CD4-positive, alpha-beta T cell (primary cell): ENCODE measurements at regions of chr3 and their contacts with region 1.

Region 1: DNA sequence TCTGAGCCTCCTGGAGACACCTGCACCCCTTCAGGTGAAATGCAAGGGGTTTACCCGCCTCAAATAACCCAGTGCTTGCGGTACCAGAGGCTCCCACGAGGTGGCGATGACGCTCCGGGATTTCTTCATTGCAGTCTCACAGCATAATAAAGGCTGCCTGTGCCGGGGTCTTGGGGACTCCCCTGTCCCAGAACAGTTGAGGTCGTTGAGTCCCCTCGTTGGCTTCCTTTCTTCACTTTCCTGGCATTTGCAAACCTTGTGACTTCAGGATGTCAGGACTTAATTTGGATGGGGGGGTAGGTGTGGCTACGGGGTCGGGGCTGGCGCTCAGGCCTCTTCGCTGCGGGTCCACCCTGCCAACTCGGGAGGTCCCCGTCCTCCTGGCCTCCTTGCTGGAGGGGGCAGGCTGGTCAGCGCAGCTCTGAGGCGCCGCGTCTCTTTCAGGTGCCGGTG is 1.3 kb downstream of the GNAT1 start:
- DNase-seq: peak; percentile 69 to 91 (median 82)
- ATAC-seq: peak; percentile 25
- H3K4me3 ChIP-seq: no peak overlapping the region
- H3K4me3 Mint-ChIP-seq: peak overlapping the region; percentile 34
- H3K27ac ChIP-seq: no peak overlapping the region
- H3K27ac Mint-ChIP-seq: no peak overlapping the region
- H3K4me1 ChIP-seq: peaks cover 27% of the 10 kb centered on the region
- H3K4me1 Mint-ChIP-seq: peaks cover 15% of the 10 kb centered on the region
- H3K27me3 ChIP-seq: peaks cover 13 to 17% of the 10 kb centered on the region in 2 experiments
- H3K27me3 Mint-ChIP-seq: peaks cover 26% of the 10 kb centered on the region
- CTCF ChIP-seq: peak; percentile 88

Region 2: GRCh38 chr3:50121416-50122032 is 71.2 kb before region 1 on chr3:
- CTCF ChIA-PET with region 1: no interaction called
- POLR2A ChIA-PET with region 1: no interaction called
- intact Hi-C with region 1: loop called (anchors 1 to 2 kb)
- DNase-seq: peak; percentile 55 to 86 (median 65)
- ATAC-seq: peak; percentile 87
- H3K4me3 ChIP-seq: no peak overlapping the region
- H3K4me3 Mint-ChIP-seq: no peak overlapping the region
- H3K27ac ChIP-seq: no peak overlapping the region
- H3K27ac Mint-ChIP-seq: peak overlapping the region; percentile 61
- H3K4me1 ChIP-seq: peaks cover 7% of the 10 kb centered on the region
- H3K4me1 Mint-ChIP-seq: peaks cover 6% of the 10 kb centered on the region
- H3K27me3 ChIP-seq: no peaks in the 10 kb centered on the region
- H3K27me3 Mint-ChIP-seq: no peaks in the 10 kb centered on the region
- CTCF ChIP-seq: peak; percentile 86

Region 3: DNA sequence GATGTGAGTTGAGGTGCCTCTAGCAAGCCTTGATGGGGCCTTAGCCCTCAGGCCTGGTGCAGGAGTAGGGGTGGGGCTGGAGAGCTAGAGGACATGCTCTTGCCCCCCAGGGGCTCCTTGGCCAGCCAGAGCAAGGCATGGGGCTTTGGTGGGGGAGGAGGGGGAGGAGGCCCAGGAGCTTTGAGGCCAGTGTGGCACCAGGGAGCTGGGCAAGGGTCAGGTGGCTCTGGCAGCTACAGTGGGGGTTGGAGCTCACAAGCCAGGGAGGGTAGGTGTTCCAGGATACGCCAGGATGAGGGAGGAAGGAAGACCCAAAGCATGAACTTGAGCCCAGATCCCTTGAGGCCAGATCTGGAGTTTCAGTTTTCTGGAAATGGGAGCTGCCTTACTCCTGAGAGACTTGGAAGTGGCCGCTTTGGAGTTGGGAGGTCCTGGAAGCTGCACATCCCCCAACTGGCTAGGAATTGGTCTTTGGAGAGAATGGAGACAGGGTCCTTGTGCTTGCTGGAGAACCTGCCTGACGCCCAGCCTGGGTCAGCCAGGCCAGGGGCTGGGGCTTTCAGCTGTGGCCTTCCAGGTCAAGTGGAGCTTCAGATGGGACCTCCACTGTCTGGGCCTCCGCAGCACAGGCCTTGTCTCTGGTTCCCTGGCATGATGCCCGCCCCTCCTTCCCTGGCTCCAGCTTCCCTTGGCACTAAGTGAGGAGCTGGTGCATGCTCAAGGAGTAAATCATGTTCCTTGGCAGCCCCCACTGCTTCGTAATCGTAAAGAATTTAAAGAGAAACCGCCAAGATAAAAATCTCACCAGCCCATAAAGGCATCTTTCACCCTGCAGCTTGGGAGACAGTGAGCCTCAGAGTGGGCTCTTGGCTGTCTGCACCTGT is 28.9 kb before region 1 on chr3:
- CTCF ChIA-PET with region 1: no interaction called
- POLR2A ChIA-PET with region 1: no interaction called
- intact Hi-C with region 1: no loop called
- DNase-seq: no peak
- ATAC-seq: no peak
- H3K4me3 ChIP-seq: no peak overlapping the region
- H3K4me3 Mint-ChIP-seq: no peak overlapping the region
- H3K27ac ChIP-seq: no peak overlapping the region
- H3K27ac Mint-ChIP-seq: no peak overlapping the region
- H3K4me1 ChIP-seq: no peaks in the 10 kb centered on the region
- H3K4me1 Mint-ChIP-seq: no peaks in the 10 kb centered on the region
- H3K27me3 ChIP-seq: no peaks in the 10 kb centered on the region
- H3K27me3 Mint-ChIP-seq: peaks cover 3% of the 10 kb centered on the region
- CTCF ChIP-seq: no peak

Region 4: DNA sequence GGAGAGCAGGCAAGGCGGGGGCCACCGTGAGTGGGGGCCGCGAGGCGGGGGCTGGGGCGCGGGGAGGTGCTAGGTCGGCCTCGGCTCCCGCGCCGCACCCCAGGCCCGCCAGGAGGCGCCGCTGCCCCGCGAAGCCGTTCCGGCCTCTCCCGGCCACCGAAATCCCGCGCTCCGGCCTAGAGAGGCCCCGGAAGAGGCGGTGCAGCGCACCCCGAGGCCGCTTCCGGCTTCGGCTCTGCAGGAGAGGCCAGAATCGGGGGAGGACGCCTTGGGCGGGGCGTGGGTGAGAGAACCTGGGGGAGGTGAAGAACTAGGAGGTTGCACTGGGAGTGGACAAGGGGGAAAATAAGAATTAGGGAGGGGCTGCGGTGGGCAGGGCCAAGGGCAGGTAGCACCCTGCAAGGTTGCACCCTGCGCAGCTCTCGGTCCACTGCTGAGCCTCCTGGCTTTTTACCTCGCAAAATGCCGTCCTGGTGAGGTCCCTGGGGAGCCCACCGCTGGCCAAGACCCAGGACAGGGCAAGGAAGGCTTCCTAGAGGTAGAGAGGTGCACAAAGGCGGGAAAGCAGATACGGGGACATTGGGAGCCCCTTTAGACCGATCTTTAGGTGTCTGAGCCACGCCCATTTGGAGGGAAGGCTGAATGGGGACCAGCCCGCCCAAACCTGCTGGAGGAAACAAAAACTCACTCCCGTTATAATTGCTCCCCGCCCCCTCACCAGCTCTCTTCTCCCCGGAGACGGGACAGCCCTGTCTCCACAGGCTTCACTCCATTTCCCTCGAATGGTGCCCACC is 34.9 kb after region 1 on chr3:
- CTCF ChIA-PET with region 1: interaction called, 82 read pairs
- POLR2A ChIA-PET with region 1: interaction called, 32 read pairs
- intact Hi-C with region 1: loop called (anchors 1 kb)
- DNase-seq: peak; percentile 82 to 96 (median 90)
- ATAC-seq: peak; percentile 80
- H3K4me3 ChIP-seq: peak overlapping the region; percentile 68
- H3K4me3 Mint-ChIP-seq: peak overlapping the region; percentile 99
- H3K27ac ChIP-seq: peak overlapping the region; percentile 47 to 70
- H3K27ac Mint-ChIP-seq: peak overlapping the region; percentile 89
- H3K4me1 ChIP-seq: peaks cover 36% of the 10 kb centered on the region
- H3K4me1 Mint-ChIP-seq: peaks cover 32% of the 10 kb centered on the region
- H3K27me3 ChIP-seq: no peaks in the 10 kb centered on the region
- H3K27me3 Mint-ChIP-seq: no peaks in the 10 kb centered on the region
- CTCF ChIP-seq: peak; percentile 85

Region 5: DNA sequence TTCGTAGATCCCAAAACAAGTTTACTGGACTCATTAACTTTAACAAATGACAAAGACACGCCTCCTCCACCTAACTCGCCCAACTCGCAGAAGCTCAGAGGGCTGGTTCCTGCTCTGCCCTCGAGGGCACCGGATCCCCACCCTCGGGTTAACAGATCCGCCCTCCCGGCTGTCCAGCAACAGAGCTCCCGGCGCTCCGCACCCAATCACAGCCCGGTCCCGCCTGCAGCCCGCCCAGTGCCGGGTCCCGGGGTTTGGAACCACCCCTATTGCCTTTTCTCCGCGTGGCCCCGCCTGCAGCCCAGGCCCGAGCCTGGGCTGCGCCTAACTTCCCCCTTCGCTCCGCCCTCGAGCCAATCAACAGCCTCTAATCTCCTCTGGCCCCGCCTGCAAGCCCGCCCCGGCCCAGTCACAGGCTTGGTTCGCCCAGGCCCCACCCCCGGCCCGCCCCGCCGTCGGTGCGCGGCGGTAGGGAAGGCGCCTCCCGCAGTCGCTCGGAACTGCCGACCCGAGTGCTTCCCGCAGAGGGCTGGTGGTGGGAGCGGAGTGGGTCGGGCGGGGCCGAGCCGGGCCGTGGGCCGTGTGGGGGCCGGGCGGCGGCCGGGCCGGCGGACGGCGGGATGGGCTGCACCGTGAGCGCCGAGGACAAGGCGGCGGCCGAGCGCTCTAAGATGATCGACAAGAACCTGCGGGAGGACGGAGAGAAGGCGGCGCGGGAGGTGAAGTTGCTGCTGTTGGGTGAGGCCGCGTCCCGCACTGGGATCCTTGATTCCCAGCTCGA is 43.2 kb after region 1 on chr3 and contains the start of gene GNAI2:
- CTCF ChIA-PET with region 1: interaction called, 11 read pairs
- POLR2A ChIA-PET with region 1: interaction called, 3 read pairs
- intact Hi-C with region 1: no loop called
- DNase-seq: peak; percentile 97 to 100 (median 99)
- ATAC-seq: peak; percentile 85
- H3K4me3 ChIP-seq: peak within 1 kb of the TSS; percentile 99
- H3K4me3 Mint-ChIP-seq: peak within 1 kb of the TSS; percentile 94
- H3K27ac ChIP-seq: peak within 1 kb of the TSS; percentile 73 to 80
- H3K27ac Mint-ChIP-seq: peak within 1 kb of the TSS; percentile 92
- H3K4me1 ChIP-seq: peaks cover 47% of the 10 kb centered on the region
- H3K4me1 Mint-ChIP-seq: peaks cover 45% of the 10 kb centered on the region
- H3K27me3 ChIP-seq: no peaks in the 10 kb centered on the region
- H3K27me3 Mint-ChIP-seq: no peaks in the 10 kb centered on the region
- CTCF ChIP-seq: no peak
- total RNA-seq, gene GNAI2: 204 to 217 TPM

Region 6: DNA sequence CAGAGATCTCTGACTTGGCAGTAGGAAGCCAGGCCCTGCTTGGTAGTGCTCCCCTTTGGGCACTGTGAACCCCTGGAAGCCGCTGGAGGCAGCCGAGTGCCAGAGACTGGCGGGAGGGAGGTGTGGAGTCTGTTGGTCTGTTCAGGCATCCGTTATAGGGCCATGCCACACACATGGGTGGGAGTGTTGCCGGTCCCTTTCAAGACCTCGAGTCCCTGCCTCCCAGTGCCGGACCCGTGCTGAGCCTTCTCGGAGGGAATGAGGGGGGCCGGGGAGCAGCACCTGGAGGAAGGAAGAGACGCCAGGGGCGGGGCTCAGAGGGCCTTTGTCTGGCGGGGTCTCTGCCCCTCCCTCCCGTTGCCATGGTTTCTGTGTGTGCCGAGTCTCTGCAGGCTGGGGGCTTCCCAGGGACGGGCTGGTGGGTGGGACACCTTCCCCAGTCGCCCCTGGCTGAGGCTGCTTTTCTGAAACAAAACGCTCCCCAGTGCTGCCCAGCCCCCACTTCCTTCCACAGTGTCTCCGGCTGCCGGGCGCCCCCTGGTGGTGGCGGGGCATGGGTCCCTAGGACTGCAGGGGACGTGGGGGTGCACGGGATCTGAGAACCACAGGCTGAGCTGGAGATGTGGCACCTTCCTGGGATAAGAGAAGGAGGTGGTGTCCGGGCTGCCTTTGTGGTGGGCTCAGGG is 53.3 kb after region 1 on chr3:
- CTCF ChIA-PET with region 1: interaction called, 53 read pairs
- POLR2A ChIA-PET with region 1: interaction called, 16 read pairs
- intact Hi-C with region 1: loop called (anchors 1 kb)
- DNase-seq: peak; percentile 92 to 98 (median 94)
- ATAC-seq: peak; percentile 80
- H3K4me3 ChIP-seq: peak overlapping the region; percentile 47
- H3K4me3 Mint-ChIP-seq: peak overlapping the region; percentile 83
- H3K27ac ChIP-seq: peak overlapping the region; percentile 89 to 90
- H3K27ac Mint-ChIP-seq: peak overlapping the region; percentile 92
- H3K4me1 ChIP-seq: peaks cover 100% of the 10 kb centered on the region
- H3K4me1 Mint-ChIP-seq: peaks cover 79% of the 10 kb centered on the region
- H3K27me3 ChIP-seq: no peaks in the 10 kb centered on the region
- H3K27me3 Mint-ChIP-seq: no peaks in the 10 kb centered on the region
- CTCF ChIP-seq: peak; percentile 98

Region 7: DNA sequence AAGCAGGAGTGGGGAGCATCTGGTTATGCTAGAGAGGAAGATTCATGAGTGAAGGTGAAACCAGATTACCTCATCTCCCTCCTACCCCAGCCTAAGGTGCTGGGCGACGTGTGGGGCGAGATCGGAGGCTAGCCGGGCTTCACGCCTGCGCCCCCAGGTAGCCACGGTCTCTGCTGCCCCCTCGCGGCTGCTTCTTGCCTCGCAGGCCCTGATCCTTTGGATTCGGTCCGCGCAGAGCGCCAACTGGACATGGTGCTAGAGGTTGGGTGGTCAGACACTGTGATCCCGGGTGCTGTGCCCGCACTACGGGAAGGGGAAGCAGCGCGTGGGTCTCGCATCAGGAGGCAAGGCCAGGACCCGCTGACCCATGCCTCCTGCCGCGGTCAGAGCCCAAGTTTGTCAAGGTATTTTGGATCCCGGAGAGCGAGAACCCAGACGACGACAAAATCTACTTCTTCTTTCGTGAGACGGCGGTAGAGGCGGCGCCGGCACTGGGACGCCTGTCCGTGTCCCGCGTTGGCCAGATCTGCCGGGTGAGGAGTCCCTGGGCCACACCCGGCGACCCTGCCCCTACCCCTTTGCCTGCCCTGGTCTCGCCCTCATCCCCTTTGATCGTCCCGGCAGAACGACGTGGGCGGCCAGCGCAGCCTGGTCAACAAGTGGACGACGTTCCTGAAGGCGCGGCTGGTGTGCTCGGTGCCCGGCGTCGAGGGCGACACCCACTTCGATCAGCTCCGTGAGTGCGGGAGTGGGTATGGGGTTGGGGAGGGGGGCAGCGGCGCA is 80.4 kb after region 1 on chr3:
- CTCF ChIA-PET with region 1: interaction called, 11 read pairs
- POLR2A ChIA-PET with region 1: no interaction called
- intact Hi-C with region 1: loop called (anchors 1 kb)
- DNase-seq: peak; percentile 70 to 92 (median 84)
- ATAC-seq: peak; percentile 78
- H3K4me3 ChIP-seq: peak overlapping the region; percentile 6
- H3K4me3 Mint-ChIP-seq: peak overlapping the region; percentile 48
- H3K27ac ChIP-seq: no peak overlapping the region
- H3K27ac Mint-ChIP-seq: no peak overlapping the region
- H3K4me1 ChIP-seq: peaks cover 40% of the 10 kb centered on the region
- H3K4me1 Mint-ChIP-seq: peaks cover 30% of the 10 kb centered on the region
- H3K27me3 ChIP-seq: peaks cover 35 to 45% of the 10 kb centered on the region in 2 experiments
- H3K27me3 Mint-ChIP-seq: peaks cover 52% of the 10 kb centered on the region
- CTCF ChIP-seq: peak; percentile 92

Region 8: DNA sequence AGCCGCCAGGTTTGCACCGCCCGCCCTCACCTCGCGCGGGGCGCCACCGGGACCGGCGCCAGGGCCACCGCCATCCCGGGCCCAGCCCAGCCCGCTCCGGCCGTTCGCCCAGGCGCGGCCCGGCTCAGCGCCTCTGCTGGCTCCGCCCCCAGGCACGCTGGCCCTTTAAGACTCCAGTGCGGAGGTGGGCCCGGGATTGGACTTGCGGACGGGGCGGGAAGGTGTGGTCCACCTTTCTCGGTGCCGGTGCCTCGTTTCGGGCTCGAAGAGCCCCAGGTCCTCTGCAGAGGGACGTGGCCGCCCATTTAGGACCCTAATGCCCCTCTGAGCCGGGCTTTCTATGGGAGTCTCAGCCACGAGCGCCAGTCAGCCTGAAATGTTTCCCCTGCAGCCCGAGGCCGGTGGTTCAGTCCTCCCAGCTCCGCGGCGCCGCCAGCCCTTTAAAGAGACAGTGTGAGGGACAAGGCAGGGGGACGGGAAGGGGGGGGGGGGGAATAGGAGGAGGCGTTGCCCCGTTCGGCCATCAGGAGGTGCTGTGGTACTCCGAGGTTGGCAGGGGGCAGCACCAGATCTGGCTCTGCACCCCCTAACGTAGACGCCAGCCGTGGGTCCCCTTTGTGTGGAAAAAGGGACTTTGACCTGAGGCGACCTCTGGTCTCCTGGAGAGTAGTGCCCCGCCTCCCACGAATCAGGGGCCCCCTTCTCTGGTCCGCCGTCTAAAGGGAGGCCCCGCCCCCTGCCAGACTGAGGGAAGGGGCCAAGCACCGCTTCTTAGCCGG is 128.8 kb after region 1 on chr3:
- CTCF ChIA-PET with region 1: no interaction called
- POLR2A ChIA-PET with region 1: no interaction called
- intact Hi-C with region 1: loop called in 1 of 2 experiments (anchors 5 kb)
- DNase-seq: peak; percentile 68 to 89 (median 76)
- ATAC-seq: peak; percentile 66
- H3K4me3 ChIP-seq: peak overlapping the region; percentile 68
- H3K4me3 Mint-ChIP-seq: peak overlapping the region; percentile 90
- H3K27ac ChIP-seq: peak overlapping the region; percentile 75 to 96
- H3K27ac Mint-ChIP-seq: peak overlapping the region; percentile 82
- H3K4me1 ChIP-seq: peaks cover 76% of the 10 kb centered on the region
- H3K4me1 Mint-ChIP-seq: peaks cover 42% of the 10 kb centered on the region
- H3K27me3 ChIP-seq: no peaks in the 10 kb centered on the region
- H3K27me3 Mint-ChIP-seq: no peaks in the 10 kb centered on the region
- CTCF ChIP-seq: peak; percentile 45

Region 9: GRCh38 chr3:50396488-50396887 is 203.8 kb after region 1 on chr3:
- CTCF ChIA-PET with region 1: no interaction called
- POLR2A ChIA-PET with region 1: no interaction called
- intact Hi-C with region 1: no loop called
- DNase-seq: no peak
- ATAC-seq: no peak
- H3K4me3 ChIP-seq: no peak overlapping the region
- H3K4me3 Mint-ChIP-seq: no peak overlapping the region
- H3K27ac ChIP-seq: no peak overlapping the region
- H3K27ac Mint-ChIP-seq: no peak overlapping the region
- H3K4me1 ChIP-seq: no peaks in the 10 kb centered on the region
- H3K4me1 Mint-ChIP-seq: no peaks in the 10 kb centered on the region
- H3K27me3 ChIP-seq: no peaks in the 10 kb centered on the region
- H3K27me3 Mint-ChIP-seq: no peaks in the 10 kb centered on the region
- CTCF ChIP-seq: no peak